ENCODE measurements at regions of chr10 and their contacts with region 1.

Region 1: GRCh38 chr10:80924063-80924952 is 386.6 kb downstream of the SH2D4B start:
- DNase-seq: peak; percentile 42
- H3K4me3 Mint-ChIP-seq: no peak overlapping the region
- H3K27ac Mint-ChIP-seq: no peak overlapping the region
- H3K4me1 Mint-ChIP-seq: no peaks in the 10 kb centered on the region
- H3K27me3 Mint-ChIP-seq: peaks cover 12% of the 10 kb centered on the region

Region 2: DNA sequence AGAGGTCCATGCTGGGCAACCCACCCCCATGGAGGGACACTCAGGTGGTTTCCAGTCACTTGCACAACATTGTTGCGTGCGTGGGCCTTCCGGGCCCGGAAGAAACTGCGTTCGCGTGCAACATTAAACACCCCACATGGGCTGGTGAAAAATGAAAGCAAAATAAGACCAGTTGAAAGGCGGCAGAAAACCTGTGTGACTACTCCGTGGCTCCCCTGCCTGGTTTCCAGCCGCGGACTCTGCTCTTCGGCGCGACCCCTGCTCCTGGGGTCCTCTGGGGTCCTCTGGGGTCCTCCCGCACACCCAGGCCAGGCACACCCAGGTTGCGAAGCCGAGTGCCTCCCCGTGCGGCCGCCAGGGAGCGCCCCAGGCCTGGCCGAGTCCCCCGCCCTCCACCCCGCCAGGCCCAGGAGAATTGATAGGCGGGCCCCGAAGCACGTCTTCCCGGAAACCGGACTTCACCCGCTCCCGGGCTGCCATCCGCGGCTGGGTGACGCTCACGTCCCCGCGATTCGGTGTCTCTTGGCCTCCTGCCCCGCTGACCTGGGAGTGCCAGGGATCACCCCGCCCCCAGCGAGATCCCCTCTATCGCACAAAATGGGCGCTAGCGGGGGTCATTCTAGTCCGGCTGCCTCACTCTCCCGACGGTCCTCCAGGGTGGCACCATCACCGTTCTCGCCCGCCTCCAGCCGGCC is 388.5 kb before region 1 on chr10:
- CTCF ChIA-PET with region 1: no interaction called
- intact Hi-C with region 1: loop called (anchors 10 kb)
- DNase-seq: peak; percentile 83
- H3K4me3 Mint-ChIP-seq: peak overlapping the region; percentile 89
- H3K27ac Mint-ChIP-seq: peak overlapping the region; percentile 98
- H3K4me1 Mint-ChIP-seq: peaks cover 28% of the 10 kb centered on the region
- H3K27me3 Mint-ChIP-seq: no peaks in the 10 kb centered on the region

Region 3: GRCh38 chr10:80952436-80952835 is 28.1 kb after region 1 on chr10:
- CTCF ChIA-PET with region 1: no interaction called
- intact Hi-C with region 1: no loop called
- DNase-seq: no peak
- H3K4me3 Mint-ChIP-seq: no peak overlapping the region
- H3K27ac Mint-ChIP-seq: no peak overlapping the region
- H3K4me1 Mint-ChIP-seq: no peaks in the 10 kb centered on the region
- H3K27me3 Mint-ChIP-seq: no peaks in the 10 kb centered on the region